HAP-1 (cell line): ENCODE measurements at regions of chr3 and their contacts with region 1.

Region 1: DNA sequence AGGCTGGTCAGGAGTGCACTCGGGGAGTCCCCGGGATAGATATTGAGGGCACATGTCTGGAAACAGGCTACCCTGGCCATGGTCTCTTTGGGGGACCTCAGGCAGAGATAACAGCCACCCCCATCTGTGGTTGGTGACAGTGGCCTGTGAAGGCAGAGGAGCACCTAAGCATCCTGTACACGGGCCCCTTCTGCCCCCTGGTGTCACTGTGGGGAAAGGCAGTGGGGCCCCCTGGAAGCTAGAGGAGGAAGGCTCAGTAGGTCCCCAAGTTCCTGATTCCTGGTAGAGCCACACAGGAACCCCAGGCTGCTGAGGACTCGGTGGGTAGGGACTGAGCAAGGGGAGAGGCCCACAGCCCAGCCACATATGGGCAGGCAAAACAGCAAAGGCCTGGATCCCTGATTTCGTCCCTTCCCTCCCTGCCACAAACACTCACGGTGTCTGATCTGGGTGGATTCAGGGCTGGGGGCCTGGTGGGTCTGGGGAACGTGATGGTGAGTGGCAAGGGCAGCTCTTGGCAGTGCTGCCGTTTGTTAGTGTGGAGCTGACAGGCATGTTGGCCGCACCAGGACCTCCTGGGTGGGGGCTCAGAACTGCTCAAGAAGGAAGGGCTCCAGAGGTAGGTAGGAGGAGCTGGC is 14.1 kb upstream of the CXCR6 start:
- DNase-seq: peak in 1 of 2 experiments; percentile 59
- H3K4me3 ChIP-seq: no peak overlapping the region
- H3K4me1 ChIP-seq: no peaks in the 10 kb centered on the region
- H3K27me3 ChIP-seq: no peaks in the 10 kb centered on the region

Region 2: GRCh38 chr3:46078712-46079400 is 149.7 kb after region 1 on chr3:
- in situ Hi-C with region 1: loop called (anchors 5 kb)
- DNase-seq: peak; percentile 89 to 93
- H3K4me3 ChIP-seq: no peak overlapping the region
- H3K4me1 ChIP-seq: no peaks in the 10 kb centered on the region
- H3K27me3 ChIP-seq: 0 out of 2 replicates have a peak, but pooled peaks cover 3% of the 10 kb centered on the region